PC-9 (cell line): ENCODE measurements at regions of chr6 and their contacts with region 1.

Region 1: GRCh38 chr6:37483917-37484785 is 15.5 kb downstream of the CCDC167 start:
- DNase-seq: peak in 1 of 2 experiments; percentile 65
- H3K4me3 ChIP-seq: no peak overlapping the region
- H3K27ac ChIP-seq: no peak overlapping the region
- H3K4me1 ChIP-seq: no peaks in the 10 kb centered on the region
- H3K27me3 ChIP-seq: no peaks in the 10 kb centered on the region
- CTCF ChIP-seq: peak; percentile 82

Region 2: DNA sequence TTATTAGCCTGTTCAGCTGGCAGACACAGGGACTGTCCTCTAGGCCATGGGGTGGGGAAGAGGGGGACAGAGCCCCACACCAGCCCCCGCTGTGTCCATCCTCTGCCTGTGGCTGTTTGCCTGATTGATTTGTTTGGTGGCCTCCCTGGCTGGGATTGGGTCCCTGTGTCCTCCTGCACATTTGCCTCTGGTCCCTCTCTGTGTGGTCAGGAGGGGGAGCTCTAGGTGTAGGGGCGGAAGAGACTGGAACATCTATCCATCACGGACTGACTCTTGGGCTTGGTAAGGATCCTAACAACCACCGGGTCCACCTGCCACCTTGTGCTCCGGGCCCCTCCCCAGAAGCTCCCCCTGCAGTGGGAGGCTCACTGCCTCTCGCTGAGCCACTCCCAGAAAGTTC is 54.0 kb after region 1 on chr6:
- CTCF ChIA-PET with region 1: no interaction called
- POLR2A ChIA-PET with region 1: no interaction called
- intact Hi-C with region 1: loop called (anchors 10 kb)
- DNase-seq: peak in 1 of 2 experiments; percentile 50
- H3K4me3 ChIP-seq: no peak overlapping the region
- H3K27ac ChIP-seq: no peak overlapping the region
- H3K4me1 ChIP-seq: no peaks in the 10 kb centered on the region
- H3K27me3 ChIP-seq: no peaks in the 10 kb centered on the region
- CTCF ChIP-seq: peak; percentile 69

Region 3: DNA sequence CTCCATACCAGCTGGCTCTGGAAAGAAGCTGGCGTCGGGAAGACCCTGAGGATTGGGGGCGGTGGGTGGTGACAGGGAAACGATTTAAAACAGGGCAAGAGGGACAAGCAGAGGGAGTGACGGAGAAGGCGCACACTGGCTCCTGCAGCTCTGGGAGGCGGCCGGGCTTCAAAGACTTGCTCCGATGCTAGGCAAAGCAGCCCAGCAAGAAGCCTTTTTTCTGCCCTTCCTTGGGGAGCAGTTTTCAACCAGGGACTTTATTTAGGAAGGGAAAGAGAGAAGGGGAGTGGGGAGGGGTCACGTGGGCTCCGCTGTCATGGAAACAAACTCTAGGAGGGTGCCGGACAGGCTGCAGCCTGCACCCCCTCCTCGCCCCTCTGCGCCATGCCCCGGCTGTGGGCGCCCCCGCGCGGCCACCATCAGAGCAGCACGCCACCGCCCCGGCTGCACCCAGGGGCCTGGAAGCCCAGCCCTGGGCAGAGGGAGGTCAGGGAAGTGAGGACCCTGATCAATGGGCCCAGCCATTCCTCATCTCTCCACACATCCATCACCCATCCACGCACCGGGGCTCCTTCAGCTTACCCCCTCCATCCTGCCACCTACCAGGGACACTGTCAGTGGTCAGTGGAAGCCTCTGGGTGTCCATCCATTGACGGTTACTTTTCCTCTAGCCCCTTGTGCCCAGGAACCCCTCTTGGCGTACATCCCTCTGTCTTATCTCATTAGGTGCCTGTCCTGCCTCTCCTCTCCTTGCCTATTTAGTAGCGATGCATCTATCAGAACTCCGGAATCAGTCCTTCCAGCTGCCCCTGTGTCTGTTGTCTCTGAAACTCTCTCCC is 82.2 kb after region 1 on chr6:
- CTCF ChIA-PET with region 1: no interaction called
- POLR2A ChIA-PET with region 1: interaction called, 3 read pairs
- intact Hi-C with region 1: loop called (anchors 10 kb)
- DNase-seq: peak in 1 of 2 experiments; percentile 54
- H3K4me3 ChIP-seq: no peak overlapping the region
- H3K27ac ChIP-seq: no peak overlapping the region
- H3K4me1 ChIP-seq: no peaks in the 10 kb centered on the region
- H3K27me3 ChIP-seq: no peaks in the 10 kb centered on the region
- CTCF ChIP-seq: peak; percentile 78